BJ (cell line): ENCODE measurements at regions of chr22 and their contacts with region 1.

Region 1: GRCh38 chr22:37381489-37381888 is 45.8 kb downstream of the ELFN2 start:
- DNase-seq: no peak
- H3K4me3 ChIP-seq: no peak overlapping the region
- H3K27me3 ChIP-seq: peaks cover 17% of the 10 kb centered on the region
- CTCF ChIP-seq: no peak

Region 2: GRCh38 chr22:37362621-37363020 is 18.9 kb before region 1 on chr22:
- CTCF ChIA-PET with region 1: no interaction called
- POLR2A ChIA-PET with region 1: no interaction called
- DNase-seq: no peak
- H3K4me3 ChIP-seq: no peak overlapping the region
- H3K27me3 ChIP-seq: peaks cover 2% of the 10 kb centered on the region; the same call in 1 of the 2 replicates
- CTCF ChIP-seq: no peak

Region 3: GRCh38 chr22:37393746-37394145 is 12.3 kb after region 1 on chr22:
- CTCF ChIA-PET with region 1: interaction called, 3 read pairs
- POLR2A ChIA-PET with region 1: interaction called, 10 read pairs
- DNase-seq: no peak
- H3K4me3 ChIP-seq: no peak overlapping the region
- H3K27me3 ChIP-seq: peaks cover 5% of the 10 kb centered on the region; the same call in 1 of the 2 replicates
- CTCF ChIP-seq: no peak